Common myeloid progenitor, CD34-positive (primary cell): ENCODE measurements at regions of chr5 and their contacts with region 1.

Region 1: DNA sequence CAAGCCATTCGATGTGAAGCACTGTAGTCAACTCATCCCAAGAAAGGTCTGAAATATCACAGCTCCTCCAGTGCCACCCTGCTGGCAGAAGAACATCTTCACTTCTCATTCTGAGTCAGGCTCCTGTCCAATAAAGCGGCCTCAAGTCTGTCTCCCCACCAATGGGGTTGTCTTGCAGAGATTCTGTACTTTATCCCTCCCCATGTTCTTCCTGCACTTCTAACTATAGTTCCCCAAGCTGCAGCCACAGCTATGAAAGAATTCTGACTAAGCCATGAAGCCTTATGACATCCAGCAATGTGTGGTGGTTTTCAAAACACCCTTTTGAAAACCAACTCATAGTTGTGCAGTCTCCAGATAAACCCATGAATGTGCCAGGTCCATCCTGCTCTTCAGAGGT is 6.8 kb downstream of the MACROH2A1 start:
- DNase-seq: peak in 2 of 3 donors; percentile 61 to 69
- H3K4me3 ChIP-seq: peak overlapping the region in 2 of 7 experiments; percentile 19 to 43
- H3K27ac ChIP-seq: peak overlapping the region in 1 of 2 experiments; percentile 65
- H3K4me1 ChIP-seq: peaks cover 32 to 100% (median 88%) of the 10 kb centered on the region in 4 experiments
- H3K27me3 ChIP-seq: no peaks in the 10 kb centered on the region

Region 2: DNA sequence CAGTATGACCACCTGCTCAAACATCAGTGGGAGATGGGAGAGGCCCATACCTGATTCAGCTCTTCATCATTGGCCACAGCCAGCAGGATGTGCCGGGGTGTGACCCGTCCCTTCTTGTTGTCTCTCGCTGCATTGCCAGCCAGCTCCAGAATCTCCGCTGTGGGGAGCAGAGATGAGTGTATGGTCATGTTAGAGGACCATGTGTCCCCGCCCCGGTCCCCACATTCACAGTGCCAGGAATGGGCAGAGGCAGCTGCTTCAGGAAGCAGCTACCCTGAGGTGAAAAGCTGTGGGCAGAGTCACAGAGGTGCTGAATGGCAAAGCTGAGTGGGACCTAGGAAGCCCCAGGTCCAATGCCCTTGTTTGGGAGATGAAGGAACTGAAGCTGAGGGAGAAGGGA is 22.3 kb before region 1 on chr5:
- CTCF ChIA-PET with region 1: interaction called, 11 read pairs
- POLR2A ChIA-PET with region 1: no interaction called
- DNase-seq: no peak
- H3K4me3 ChIP-seq: peak overlapping the region in 1 of 7 experiments; percentile 8
- H3K27ac ChIP-seq: peak overlapping the region in 1 of 2 experiments; percentile 67
- H3K4me1 ChIP-seq: peaks cover 35 to 99% (median 89%) of the 10 kb centered on the region in 4 experiments
- H3K27me3 ChIP-seq: no peaks in the 10 kb centered on the region